ENCODE measurements at regions of chr5 and their contacts with region 1.

Region 1: DNA sequence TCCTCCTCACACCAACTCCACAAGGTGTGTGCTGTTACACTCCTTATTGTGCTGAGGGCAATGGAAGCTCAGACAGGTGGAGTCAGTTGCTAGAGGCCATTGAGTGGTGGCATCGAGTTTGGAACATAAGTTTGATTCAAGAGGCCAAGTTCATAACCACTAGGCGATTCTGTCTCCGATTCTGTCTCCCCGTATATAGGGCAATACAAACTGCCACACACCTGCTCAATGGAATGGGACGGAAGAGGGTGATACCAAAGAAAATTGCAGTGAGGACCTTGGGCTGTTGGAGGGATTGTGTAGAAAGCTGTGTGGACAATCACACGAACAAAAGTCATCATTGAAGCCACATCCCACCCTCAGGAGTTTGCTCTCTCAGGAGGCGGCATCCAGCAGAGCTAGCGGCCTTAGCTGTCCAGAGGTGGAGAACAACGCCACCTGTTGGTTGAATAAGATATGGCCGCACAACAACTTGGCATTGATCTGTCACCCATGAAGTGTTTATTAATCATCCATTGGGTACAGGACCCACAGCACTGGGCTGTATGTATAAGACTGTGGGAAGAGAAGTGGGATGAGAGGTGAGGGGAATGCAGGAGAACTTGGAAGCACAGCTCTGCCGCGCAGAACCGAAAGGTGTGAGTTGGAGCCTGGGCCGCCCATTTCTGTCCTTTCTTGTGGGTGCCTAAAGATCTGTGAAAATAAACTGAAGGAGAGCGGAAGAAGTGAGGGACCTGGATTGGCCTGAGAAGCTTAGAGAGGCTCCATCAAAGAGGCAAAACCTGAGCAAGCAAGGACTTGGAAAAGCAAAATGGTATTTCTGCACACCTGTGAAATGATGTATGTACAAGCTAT is 16.1 kb upstream of the NEUROG1 start:
- DNase-seq: no peak
- H3K4me3 ChIP-seq: no peak overlapping the region
- H3K27ac ChIP-seq: no peak overlapping the region
- H3K4me1 ChIP-seq: peaks cover 0 to 18% (median 0%) of the 10 kb centered on the region in 3 donors
- H3K27me3 ChIP-seq: peaks cover 0 to 85% (median 0%) of the 10 kb centered on the region in 4 donors
- CTCF ChIP-seq: peak; percentile 65 to 91 (median 86)
- POLR2A ChIP-seq: no peak

Region 2: GRCh38 chr5:135466178-135467050 is 85.4 kb before region 1 on chr5:
- intact Hi-C with region 1: loop called (anchors 2 kb)
- DNase-seq: no peak
- H3K4me3 ChIP-seq: peak overlapping the region in 2 of 4 donors; percentile 4 to 43
- H3K27ac ChIP-seq: no peak overlapping the region
- H3K4me1 ChIP-seq: peaks cover 3 to 22% (median 5%) of the 10 kb centered on the region in 3 donors
- H3K27me3 ChIP-seq: peaks cover 0 to 62% (median 0%) of the 10 kb centered on the region in 4 donors
- CTCF ChIP-seq: peak; percentile 79 to 91 (median 88)
- POLR2A ChIP-seq: no peak

Measured in esophagus squamous epithelium (tissue), 5 donors.